T-cell (primary cell): ENCODE measurements at regions of chr3 and their contacts with region 1.

Region 1: GRCh38 chr3:179321668-179322285 is 1.1 kb upstream of the ZNF639 start:
- DNase-seq: peak in 1 of 35 experiments; percentile 32
- ATAC-seq: no peak
- H3K4me3 ChIP-seq: peak overlapping the region in 1 of 2 donors; percentile 62
- H3K4me3 Mint-ChIP-seq: peak overlapping the region; percentile 71 to 86 (median 80)
- H3K27ac ChIP-seq: peak overlapping the region; percentile 62
- H3K27ac Mint-ChIP-seq: peak overlapping the region; percentile 81 to 83
- H3K4me1 ChIP-seq: peaks cover 11 to 15% of the 10 kb centered on the region in 2 experiments
- H3K4me1 Mint-ChIP-seq: peaks cover 34 to 37% (median 36%) of the 10 kb centered on the region in 3 donors
- H3K27me3 ChIP-seq: no peaks in the 10 kb centered on the region
- H3K27me3 Mint-ChIP-seq: no peaks in the 10 kb centered on the region

Region 2: DNA sequence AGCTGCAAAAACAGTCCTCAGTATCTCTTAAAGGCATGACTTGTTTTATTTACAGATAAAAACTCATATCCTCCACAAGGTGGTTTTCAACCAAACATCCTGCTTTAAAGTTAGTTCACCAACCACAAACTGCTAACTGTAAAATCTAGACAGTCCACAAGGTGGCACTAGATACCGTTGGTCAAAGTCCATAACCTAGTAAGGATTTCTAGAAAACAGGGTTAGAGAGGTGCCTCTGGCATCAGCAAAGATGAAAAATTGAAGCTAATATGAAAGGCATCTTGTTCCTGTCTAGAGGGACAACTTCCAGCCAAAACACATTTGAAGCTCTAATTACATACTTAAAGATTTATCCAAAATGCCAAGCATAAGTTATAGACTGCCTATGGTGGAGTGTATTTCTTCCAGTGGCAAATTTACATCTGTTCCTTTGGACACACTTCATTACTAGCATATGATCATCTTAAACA is 306.2 kb before region 1 on chr3:
- CTCF ChIA-PET with region 1: interaction called, 9 to 11 read pairs
- POLR2A ChIA-PET with region 1: no interaction called
- DNase-seq: peak in 32 of 35 experiments; percentile 3 to 90 (median 52)
- ATAC-seq: peak; percentile 90 to 97 (median 94)
- H3K4me3 ChIP-seq: no peak overlapping the region
- H3K4me3 Mint-ChIP-seq: no peak overlapping the region
- H3K27ac ChIP-seq: no peak overlapping the region
- H3K27ac Mint-ChIP-seq: peak overlapping the region; percentile 13 to 45
- H3K4me1 ChIP-seq: peaks cover 0 to 13% of the 10 kb centered on the region in 2 experiments
- H3K4me1 Mint-ChIP-seq: peaks cover 26 to 43% (median 30%) of the 10 kb centered on the region in 3 donors
- H3K27me3 ChIP-seq: no peaks in the 10 kb centered on the region
- H3K27me3 Mint-ChIP-seq: no peaks in the 10 kb centered on the region

Region 3: DNA sequence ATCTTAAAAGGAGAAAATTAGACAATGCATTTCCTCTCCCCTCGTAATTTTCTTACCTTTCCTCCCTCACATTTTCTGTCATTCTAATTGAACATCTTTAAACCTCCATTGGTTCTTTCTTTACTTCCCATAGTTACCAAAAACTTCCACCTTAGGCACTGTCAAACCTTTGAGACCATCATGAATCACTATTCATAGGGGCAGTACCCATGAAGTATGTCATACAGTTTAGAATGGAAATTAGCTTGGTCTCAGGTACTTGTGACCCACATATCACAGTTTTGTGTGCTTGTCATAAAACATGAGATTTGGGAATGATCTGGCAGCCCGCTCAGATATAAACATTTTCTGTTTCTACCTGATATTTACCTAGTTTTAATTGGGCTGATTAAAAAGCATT is 121.0 kb before region 1 on chr3:
- CTCF ChIA-PET with region 1: interaction called in 1 of 2 experiments, 10 read pairs
- POLR2A ChIA-PET with region 1: no interaction called
- DNase-seq: no peak
- ATAC-seq: no peak
- H3K4me3 ChIP-seq: no peak overlapping the region
- H3K4me3 Mint-ChIP-seq: no peak overlapping the region
- H3K27ac ChIP-seq: no peak overlapping the region
- H3K27ac Mint-ChIP-seq: no peak overlapping the region
- H3K4me1 ChIP-seq: peaks cover 0 to 4% of the 10 kb centered on the region in 2 experiments
- H3K4me1 Mint-ChIP-seq: peaks cover 21 to 29% (median 27%) of the 10 kb centered on the region in 3 donors
- H3K27me3 ChIP-seq: no peaks in the 10 kb centered on the region
- H3K27me3 Mint-ChIP-seq: no peaks in the 10 kb centered on the region

Region 4: DNA sequence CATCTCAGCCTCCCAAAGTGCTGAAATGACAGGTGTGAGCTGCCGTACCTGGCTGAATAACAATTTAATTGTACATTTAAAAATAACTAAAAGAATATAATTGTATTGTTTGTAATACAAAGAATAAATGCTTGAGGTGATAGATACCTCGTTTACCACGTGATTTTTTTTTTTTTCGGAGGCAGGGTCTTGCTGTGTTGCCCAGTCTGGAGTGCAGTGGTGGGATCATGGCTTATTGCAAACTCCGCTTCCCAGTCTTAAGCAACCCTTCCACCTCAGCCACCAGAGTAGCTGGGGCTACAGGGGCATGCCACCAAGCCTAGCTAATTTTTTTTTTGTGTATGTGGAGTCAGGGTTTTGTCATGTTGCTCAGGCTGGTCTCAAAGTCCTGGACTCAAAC is 41.6 kb after region 1 on chr3:
- CTCF ChIA-PET with region 1: no interaction called
- POLR2A ChIA-PET with region 1: no interaction called
- DNase-seq: no peak
- ATAC-seq: no peak
- H3K4me3 ChIP-seq: no peak overlapping the region
- H3K4me3 Mint-ChIP-seq: no peak overlapping the region
- H3K27ac ChIP-seq: no peak overlapping the region
- H3K27ac Mint-ChIP-seq: no peak overlapping the region
- H3K4me1 ChIP-seq: no peaks in the 10 kb centered on the region
- H3K4me1 Mint-ChIP-seq: no peaks in the 10 kb centered on the region
- H3K27me3 ChIP-seq: no peaks in the 10 kb centered on the region
- H3K27me3 Mint-ChIP-seq: no peaks in the 10 kb centered on the region